ENCODE measurements at regions of chr14 and their contacts with region 1.

Region 1: DNA sequence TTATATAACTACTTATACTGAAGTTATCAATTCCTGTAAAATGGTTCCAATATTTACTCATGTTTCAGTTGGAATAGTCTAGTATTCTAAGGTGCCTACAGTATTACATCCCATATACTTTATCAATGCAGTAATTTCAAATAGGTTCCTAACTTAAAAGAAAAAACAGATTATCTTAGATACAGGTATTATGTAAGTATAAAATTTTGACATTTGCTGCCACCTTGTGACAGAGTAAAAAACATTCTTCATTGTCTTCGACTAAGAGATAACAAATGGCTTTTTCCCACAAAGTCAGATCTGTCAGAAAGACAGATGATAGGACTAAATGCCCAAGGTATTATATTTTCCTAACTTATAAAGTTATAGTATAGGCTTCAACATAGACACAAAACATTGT is 78.7 kb downstream of the TXNDC16 start:
- DNase-seq: no peak
- ATAC-seq: no peak
- H3K4me3 ChIP-seq: no peak overlapping the region
- H3K27ac ChIP-seq: no peak overlapping the region
- H3K4me1 ChIP-seq: no peaks in the 10 kb centered on the region
- H3K27me3 ChIP-seq: no peaks in the 10 kb centered on the region
- CTCF ChIP-seq: peak in 10 of 12 donors; percentile 20 to 55 (median 36)
- POLR2A ChIP-seq: no peak

Region 2: DNA sequence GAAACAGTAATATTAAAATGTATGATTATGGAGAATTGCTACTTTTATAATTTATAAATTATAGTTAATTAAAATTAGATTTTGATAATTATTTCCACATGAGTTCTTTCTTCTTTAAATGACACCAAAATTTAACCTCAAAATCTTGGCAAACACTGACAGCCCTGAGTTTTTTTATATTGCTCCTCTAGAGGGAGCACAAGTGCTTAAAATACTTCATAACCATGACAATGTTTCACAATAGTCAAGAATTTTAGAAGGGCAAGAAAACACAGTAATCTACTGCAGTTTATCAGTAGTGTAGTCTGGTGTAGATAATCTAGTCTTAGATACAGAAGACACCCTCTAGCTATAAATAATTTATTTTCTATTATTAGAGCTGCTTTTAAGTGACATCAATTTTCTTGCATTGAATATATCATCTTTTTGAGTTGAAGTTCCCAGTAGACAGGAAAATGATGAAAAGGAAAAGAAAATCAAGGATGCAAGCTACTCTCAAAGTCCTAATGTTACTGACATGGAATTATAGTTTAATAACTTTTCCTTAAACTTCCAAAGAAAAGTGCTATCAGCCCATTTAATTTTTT is 173.8 kb before region 1 on chr14:
- intact Hi-C with region 1: loop called (anchors 1 to 5 kb)
- DNase-seq: no peak
- ATAC-seq: peak; percentile 37 to 64 (median 52)
- H3K4me3 ChIP-seq: no peak overlapping the region
- H3K27ac ChIP-seq: no peak overlapping the region
- H3K4me1 ChIP-seq: peaks cover 0 to 9% (median 0%) of the 10 kb centered on the region in 12 donors
- H3K27me3 ChIP-seq: no peaks in the 10 kb centered on the region
- CTCF ChIP-seq: peak; percentile 55 to 82 (median 70)
- POLR2A ChIP-seq: no peak

Region 3: GRCh38 chr14:52380294-52380693 is 93.3 kb before region 1 on chr14:
- intact Hi-C with region 1: no loop called
- DNase-seq: no peak
- ATAC-seq: no peak
- H3K4me3 ChIP-seq: no peak overlapping the region
- H3K27ac ChIP-seq: no peak overlapping the region
- H3K4me1 ChIP-seq: no peaks in the 10 kb centered on the region
- H3K27me3 ChIP-seq: peaks cover 0 to 8% (median 0%) of the 10 kb centered on the region in 9 donors
- CTCF ChIP-seq: no peak
- POLR2A ChIP-seq: no peak

Region 4: GRCh38 chr14:52522033-52522432 is 48.5 kb after region 1 on chr14:
- intact Hi-C with region 1: no loop called
- DNase-seq: no peak
- ATAC-seq: no peak
- H3K4me3 ChIP-seq: no peak overlapping the region
- H3K27ac ChIP-seq: no peak overlapping the region
- H3K4me1 ChIP-seq: no peaks in the 10 kb centered on the region
- H3K27me3 ChIP-seq: no peaks in the 10 kb centered on the region
- CTCF ChIP-seq: no peak
- POLR2A ChIP-seq: no peak

Region 5: DNA sequence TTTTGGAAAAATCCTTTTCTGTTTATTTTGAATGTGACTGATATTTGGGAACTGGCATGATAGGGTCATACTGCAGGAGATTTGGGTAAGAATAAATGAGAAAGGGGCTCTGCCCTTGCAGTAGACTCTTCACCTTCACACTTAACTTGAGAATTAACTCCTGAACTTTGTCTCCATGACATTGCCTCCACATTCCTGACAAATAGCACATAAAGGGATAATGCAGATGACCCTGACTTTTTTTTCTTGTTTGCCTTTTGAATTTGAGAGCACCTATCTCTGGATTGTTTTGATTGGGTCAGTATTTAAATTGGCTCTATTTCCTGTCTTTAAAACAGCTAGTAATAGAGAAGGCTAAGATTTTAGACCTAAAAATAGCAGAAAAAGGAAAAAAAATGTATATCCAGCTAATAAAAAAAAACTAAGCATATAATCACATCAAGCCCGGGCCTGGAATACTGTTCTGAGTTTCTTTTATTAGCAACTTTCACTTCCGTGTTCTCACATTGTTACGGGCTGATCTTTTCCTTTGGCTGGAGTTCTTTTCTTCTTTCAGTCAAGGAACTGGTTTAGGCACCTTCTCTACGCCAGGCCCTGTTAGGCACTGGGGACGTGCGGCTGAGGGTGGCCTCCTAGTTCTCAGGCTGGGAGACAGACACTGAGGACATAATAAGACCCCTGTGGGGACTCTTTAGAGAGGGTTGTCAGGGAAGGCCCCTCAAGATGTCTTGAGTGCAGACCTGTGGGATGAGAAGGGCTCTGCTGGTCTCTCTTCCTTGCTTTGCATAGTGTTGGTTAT is 370.9 kb after region 1 on chr14:
- intact Hi-C with region 1: no loop called
- DNase-seq: peak in 1 of 5 donors; percentile 63
- ATAC-seq: peak; percentile 33 to 77 (median 68)
- H3K4me3 ChIP-seq: peak overlapping the region in 4 of 12 donors; percentile 1 to 6 (median 2)
- H3K27ac ChIP-seq: peak overlapping the region; percentile 41 to 79 (median 66)
- H3K4me1 ChIP-seq: peaks cover 0 to 21% (median 13%) of the 10 kb centered on the region in 12 donors
- H3K27me3 ChIP-seq: no peaks in the 10 kb centered on the region
- CTCF ChIP-seq: no peak
- POLR2A ChIP-seq: no peak

Measured in heart left ventricle (tissue), 16 donors.